B cell (primary cell): ENCODE measurements at regions of chr3 and their contacts with region 1.

Region 1: GRCh38 chr3:11601446-11602238 is 42.1 kb downstream of the VGLL4 start:
- DNase-seq: peak; percentile 81
- ATAC-seq: peak; percentile 99
- H3K4me3 ChIP-seq: peak overlapping the region in 1 of 5 experiments; percentile 2
- H3K4me3 Mint-ChIP-seq: peak overlapping the region; percentile 87
- H3K27ac ChIP-seq: peak overlapping the region; percentile 65 to 87
- H3K27ac Mint-ChIP-seq: peak overlapping the region; percentile 93
- H3K4me1 ChIP-seq: peaks cover 18 to 27% of the 10 kb centered on the region in 2 donors
- H3K4me1 Mint-ChIP-seq: peaks cover 41% of the 10 kb centered on the region
- H3K27me3 ChIP-seq: no peaks in the 10 kb centered on the region
- H3K27me3 Mint-ChIP-seq: no peaks in the 10 kb centered on the region
- CTCF ChIP-seq: no peak

Region 2: GRCh38 chr3:11300970-11301369 is 300.7 kb before region 1 on chr3:
- CTCF ChIA-PET with region 1: no interaction called
- POLR2A ChIA-PET with region 1: no interaction called
- intact Hi-C with region 1: no loop called
- DNase-seq: no peak
- ATAC-seq: no peak
- H3K4me3 ChIP-seq: no peak overlapping the region
- H3K4me3 Mint-ChIP-seq: no peak overlapping the region
- H3K27ac ChIP-seq: no peak overlapping the region
- H3K27ac Mint-ChIP-seq: no peak overlapping the region
- H3K4me1 ChIP-seq: no peaks in the 10 kb centered on the region
- H3K4me1 Mint-ChIP-seq: no peaks in the 10 kb centered on the region
- H3K27me3 ChIP-seq: no peaks in the 10 kb centered on the region
- H3K27me3 Mint-ChIP-seq: no peaks in the 10 kb centered on the region
- CTCF ChIP-seq: no peak

Region 3: DNA sequence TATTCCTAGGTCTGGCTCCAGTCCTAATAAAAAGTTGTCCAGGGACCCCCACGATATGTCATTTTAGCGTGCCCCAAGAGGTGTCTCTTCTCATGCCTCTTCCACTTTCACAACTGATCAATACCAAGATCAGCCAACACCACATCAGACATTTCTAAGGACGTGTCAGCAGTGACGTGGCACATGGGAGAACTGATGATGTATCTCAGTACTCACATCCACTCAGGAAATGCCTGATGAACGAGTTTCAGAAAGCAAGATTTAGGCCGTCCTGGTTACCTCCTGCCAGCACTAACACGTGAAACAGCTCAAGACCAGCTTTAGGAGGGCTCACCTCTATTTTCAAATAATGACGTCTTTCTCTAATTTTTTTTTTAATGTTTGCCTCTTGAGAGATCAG is 22.5 kb after region 1 on chr3:
- CTCF ChIA-PET with region 1: interaction called, 4 read pairs
- POLR2A ChIA-PET with region 1: interaction called, 3 read pairs
- intact Hi-C with region 1: loop called (anchors 2 kb)
- DNase-seq: no peak
- ATAC-seq: no peak
- H3K4me3 ChIP-seq: no peak overlapping the region
- H3K4me3 Mint-ChIP-seq: no peak overlapping the region
- H3K27ac ChIP-seq: no peak overlapping the region
- H3K27ac Mint-ChIP-seq: no peak overlapping the region
- H3K4me1 ChIP-seq: peaks cover 0 to 14% of the 10 kb centered on the region in 2 donors
- H3K4me1 Mint-ChIP-seq: peaks cover 54% of the 10 kb centered on the region
- H3K27me3 ChIP-seq: no peaks in the 10 kb centered on the region
- H3K27me3 Mint-ChIP-seq: no peaks in the 10 kb centered on the region
- CTCF ChIP-seq: no peak

Region 4: GRCh38 chr3:11643605-11644087 is 42.0 kb after region 1 on chr3 and contains the start of gene VGLL4:
- CTCF ChIA-PET with region 1: no interaction called
- POLR2A ChIA-PET with region 1: interaction called, 5 read pairs
- intact Hi-C with region 1: loop called (anchors 2 kb)
- DNase-seq: peak; percentile 71
- ATAC-seq: peak; percentile 62
- H3K4me3 ChIP-seq: peak within 1 kb of the TSS; percentile 75 to 98 (median 83)
- H3K4me3 Mint-ChIP-seq: peak within 1 kb of the TSS; percentile 91
- H3K27ac ChIP-seq: peak within 1 kb of the TSS; percentile 80 to 91
- H3K27ac Mint-ChIP-seq: peak within 1 kb of the TSS; percentile 91
- H3K4me1 ChIP-seq: peaks cover 7 to 18% of the 10 kb centered on the region in 2 donors
- H3K4me1 Mint-ChIP-seq: peaks cover 31% of the 10 kb centered on the region
- H3K27me3 ChIP-seq: no peaks in the 10 kb centered on the region
- H3K27me3 Mint-ChIP-seq: no peaks in the 10 kb centered on the region
- CTCF ChIP-seq: no peak
- total RNA-seq, gene VGLL4: 29.0 and 30.2 TPM in 2 replicates